ENCODE measurements at regions of chr13 and their contacts with region 1.

Region 1: GRCh38 chr13:25329706-25330105 is 28.3 kb downstream of the NUP58 start:
- DNase-seq: no peak
- H3K4me3 ChIP-seq: no peak overlapping the region
- H3K27ac ChIP-seq: no peak overlapping the region
- H3K4me1 ChIP-seq: no peaks in the 10 kb centered on the region
- H3K27me3 ChIP-seq: no peaks in the 10 kb centered on the region
- CTCF ChIP-seq: no peak
- POLR2A ChIP-seq: no peak

Region 2: GRCh38 chr13:25200783-25201182 is 128.9 kb before region 1 on chr13:
- intact Hi-C with region 1: no loop called
- DNase-seq: no peak
- H3K4me3 ChIP-seq: no peak overlapping the region
- H3K27ac ChIP-seq: no peak overlapping the region
- H3K4me1 ChIP-seq: no peaks in the 10 kb centered on the region
- H3K27me3 ChIP-seq: peaks cover 0 to 5% of the 10 kb centered on the region in 2 donors
- CTCF ChIP-seq: no peak
- POLR2A ChIP-seq: no peak

Region 3: GRCh38 chr13:25237083-25237482 is 92.6 kb before region 1 on chr13:
- intact Hi-C with region 1: loop called (anchors 2 kb)
- DNase-seq: no peak
- H3K4me3 ChIP-seq: no peak overlapping the region
- H3K27ac ChIP-seq: no peak overlapping the region
- H3K4me1 ChIP-seq: no peaks in the 10 kb centered on the region
- H3K27me3 ChIP-seq: no peaks in the 10 kb centered on the region
- CTCF ChIP-seq: no peak
- POLR2A ChIP-seq: no peak

Region 4: DNA sequence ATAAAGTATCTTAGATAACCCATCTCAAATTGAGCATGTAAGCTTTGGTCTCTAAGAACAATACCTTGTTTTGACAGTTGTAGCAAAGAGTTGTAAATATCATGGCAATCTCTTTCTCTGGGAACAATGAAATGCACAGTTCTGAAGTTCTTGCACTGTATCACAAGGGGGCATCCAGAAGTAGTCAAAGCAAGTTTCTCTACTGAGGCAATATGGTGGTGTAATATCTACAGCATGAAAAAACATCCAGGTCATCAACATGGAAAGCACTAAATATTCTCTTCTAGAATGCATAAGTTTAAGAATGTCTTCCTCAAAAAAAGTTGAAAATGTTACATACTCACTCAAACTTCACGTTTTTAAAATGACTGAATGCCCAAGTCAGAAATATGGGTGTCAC is 62.0 kb before region 1 on chr13:
- intact Hi-C with region 1: no loop called
- DNase-seq: no peak
- H3K4me3 ChIP-seq: no peak overlapping the region
- H3K27ac ChIP-seq: no peak overlapping the region
- H3K4me1 ChIP-seq: no peaks in the 10 kb centered on the region
- H3K27me3 ChIP-seq: no peaks in the 10 kb centered on the region
- CTCF ChIP-seq: no peak
- POLR2A ChIP-seq: no peak

Measured in breast epithelium (tissue), 4 donors.